Heart right ventricle (tissue), 16 donors: ENCODE measurements at regions of chr5 and their contacts with region 1.

Region 1: GRCh38 chr5:120055858-120056257 is 408.2 kb upstream of the PRR16 start:
- DNase-seq: no peak
- ATAC-seq: peak; percentile 52 to 81 (median 74)
- H3K4me3 ChIP-seq: no peak overlapping the region
- H3K27ac ChIP-seq: peak overlapping the region in 7 of 10 donors; percentile 6 to 76 (median 28)
- H3K4me1 ChIP-seq: peaks cover 0 to 43% (median 7%) of the 10 kb centered on the region in 9 donors
- H3K27me3 ChIP-seq: no peaks in the 10 kb centered on the region
- CTCF ChIP-seq: peak in 7 of 9 donors; percentile 3 to 53 (median 38)

Region 2: DNA sequence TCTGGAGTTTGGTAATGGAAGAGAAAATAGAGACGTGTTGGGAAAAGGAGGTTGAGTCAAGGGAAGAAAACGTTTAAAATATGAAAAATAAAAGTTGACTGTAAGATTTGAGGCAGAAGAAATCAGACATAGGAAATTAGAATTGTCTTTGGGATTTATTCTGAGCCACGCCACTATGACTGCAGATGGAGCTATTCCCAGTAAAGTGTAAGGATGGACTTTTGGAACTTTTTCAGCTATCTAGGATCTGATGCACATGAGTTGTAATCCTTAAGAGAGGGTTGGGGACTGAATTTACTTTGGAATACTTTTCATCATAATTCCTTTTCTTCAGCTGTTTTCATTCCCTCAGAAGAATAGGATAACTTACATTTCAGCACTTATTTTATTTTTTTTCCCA is 89.8 kb before region 1 on chr5:
- intact Hi-C with region 1: loop called in 1 of 10 experiments (anchors 5 kb)
- DNase-seq: no peak
- ATAC-seq: peak in 4 of 8 donors; percentile 57 to 77 (median 69)
- H3K4me3 ChIP-seq: no peak overlapping the region
- H3K27ac ChIP-seq: peak overlapping the region in 1 of 10 donors; percentile 6
- H3K4me1 ChIP-seq: peaks cover 0 to 5% (median 0%) of the 10 kb centered on the region in 9 donors
- H3K27me3 ChIP-seq: no peaks in the 10 kb centered on the region
- CTCF ChIP-seq: peak in 7 of 9 donors; percentile 14 to 52 (median 34)

Region 3: DNA sequence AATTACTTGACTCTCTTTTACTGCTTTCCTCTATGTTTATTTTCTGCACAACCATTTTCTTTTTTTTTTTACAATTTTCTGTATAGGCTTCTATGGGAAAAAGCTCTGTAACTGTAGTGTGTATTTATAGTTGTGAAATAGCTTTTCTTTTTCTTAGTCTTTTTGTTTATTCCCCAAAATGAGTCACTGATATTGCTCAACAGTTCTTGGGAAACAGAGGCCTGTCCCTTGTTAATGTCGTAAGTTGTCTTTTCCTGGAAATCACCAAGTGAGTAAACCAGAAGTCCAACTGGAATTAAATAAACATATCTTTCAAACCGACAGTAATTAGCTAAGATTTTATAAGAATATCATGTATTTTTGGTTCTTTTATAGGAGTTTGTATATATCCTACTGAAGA is 83.2 kb after region 1 on chr5:
- intact Hi-C with region 1: loop called in 4 of 10 experiments (anchors 5 to 10 kb)
- DNase-seq: peak in 1 of 2 donors; percentile 15
- ATAC-seq: peak in 7 of 8 donors; percentile 61 to 88 (median 82)
- H3K4me3 ChIP-seq: no peak overlapping the region
- H3K27ac ChIP-seq: peak overlapping the region in 8 of 10 donors; percentile 53 to 86 (median 76)
- H3K4me1 ChIP-seq: peaks cover 0 to 29% (median 0%) of the 10 kb centered on the region in 9 donors
- H3K27me3 ChIP-seq: no peaks in the 10 kb centered on the region
- CTCF ChIP-seq: no peak

Region 4: GRCh38 chr5:120146787-120147186 is 90.9 kb after region 1 on chr5:
- intact Hi-C with region 1: loop called in 2 of 10 experiments (anchors 10 kb)
- DNase-seq: no peak
- ATAC-seq: no peak
- H3K4me3 ChIP-seq: no peak overlapping the region
- H3K27ac ChIP-seq: no peak overlapping the region
- H3K4me1 ChIP-seq: no peaks in the 10 kb centered on the region
- H3K27me3 ChIP-seq: no peaks in the 10 kb centered on the region
- CTCF ChIP-seq: no peak

Region 5: DNA sequence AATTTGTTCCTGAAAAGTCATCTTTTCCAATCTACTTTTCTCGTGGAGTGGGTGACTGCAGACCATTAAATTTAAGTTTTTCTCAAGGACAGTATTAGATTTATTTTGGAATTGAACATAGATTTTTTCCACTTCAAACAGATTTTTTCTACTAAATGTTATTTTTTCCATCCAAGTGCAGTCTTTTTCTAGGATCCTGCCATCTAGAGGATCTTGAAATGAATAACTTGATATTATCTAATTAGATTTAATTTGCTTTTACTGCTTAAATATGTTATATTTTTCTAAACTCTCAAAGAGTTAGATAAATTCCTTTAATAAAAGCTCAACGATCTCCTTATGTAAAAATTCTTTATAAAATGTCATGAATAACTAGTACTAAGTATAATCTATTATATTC is 271.3 kb after region 1 on chr5:
- intact Hi-C with region 1: loop called in 1 of 10 experiments (anchors 10 kb)
- DNase-seq: no peak
- ATAC-seq: no peak
- H3K4me3 ChIP-seq: no peak overlapping the region
- H3K27ac ChIP-seq: no peak overlapping the region
- H3K4me1 ChIP-seq: no peaks in the 10 kb centered on the region
- H3K27me3 ChIP-seq: no peaks in the 10 kb centered on the region
- CTCF ChIP-seq: peak in 4 of 9 donors; percentile 5 to 29 (median 23)

Region 6: GRCh38 chr5:120452471-120452870 is 396.6 kb after region 1 on chr5:
- intact Hi-C with region 1: loop called in 6 of 10 experiments (anchors 2 to 10 kb)
- DNase-seq: no peak
- ATAC-seq: no peak
- H3K4me3 ChIP-seq: no peak overlapping the region
- H3K27ac ChIP-seq: no peak overlapping the region
- H3K4me1 ChIP-seq: peaks cover 0 to 28% (median 4%) of the 10 kb centered on the region in 9 donors
- H3K27me3 ChIP-seq: no peaks in the 10 kb centered on the region
- CTCF ChIP-seq: no peak

Region 7: GRCh38 chr5:120457839-120458507 is 402.1 kb after region 1 on chr5:
- intact Hi-C with region 1: loop called in 7 of 10 experiments (anchors 2 to 10 kb)
- DNase-seq: peak; percentile 74 to 80
- ATAC-seq: peak; percentile 57 to 90 (median 80)
- H3K4me3 ChIP-seq: peak overlapping the region in 9 of 10 donors; percentile 26 to 51 (median 44)
- H3K27ac ChIP-seq: peak overlapping the region in 5 of 10 donors; percentile 29 to 65 (median 45)
- H3K4me1 ChIP-seq: peaks cover 0 to 16% (median 6%) of the 10 kb centered on the region in 9 donors
- H3K27me3 ChIP-seq: peaks cover 0 to 2% (median 0%) of the 10 kb centered on the region in 7 donors
- CTCF ChIP-seq: peak; percentile 64 to 88 (median 78)